Heart left ventricle (tissue), 16 donors: ENCODE measurements at regions of chr1 and their contacts with region 1.

Region 1: DNA sequence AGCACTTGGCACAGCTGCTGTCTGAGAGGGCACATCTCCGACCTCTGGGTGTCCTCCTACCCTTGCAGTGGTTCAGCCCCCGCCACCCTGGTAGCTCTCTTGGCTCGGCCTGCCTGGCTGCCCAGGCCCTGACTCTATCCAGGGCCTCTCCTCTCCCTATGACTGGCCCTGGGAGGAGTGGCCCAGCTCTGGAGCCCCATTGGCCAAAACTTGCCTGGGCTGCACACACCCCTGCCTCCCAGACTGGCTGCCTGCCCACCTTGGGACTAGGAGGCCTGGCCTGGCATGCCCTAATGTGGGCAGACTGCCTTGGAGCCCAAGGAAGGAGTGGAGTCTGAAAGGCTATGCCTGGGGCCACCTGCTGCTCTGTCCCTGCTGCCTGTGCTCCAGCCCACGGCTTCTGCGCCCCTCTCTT is 33.6 kb downstream of the ACOT11 start:
- DNase-seq: peak; percentile 88 to 97 (median 91)
- ATAC-seq: peak; percentile 88 to 90 (median 88)
- H3K4me3 ChIP-seq: no peak overlapping the region
- H3K27ac ChIP-seq: peak overlapping the region; percentile 47 to 98 (median 89)
- H3K4me1 ChIP-seq: peaks cover under 1 to 92% (median 58%) of the 10 kb centered on the region in 12 donors
- H3K27me3 ChIP-seq: no peaks in the 10 kb centered on the region
- CTCF ChIP-seq: peak in 1 of 12 donors; percentile 9
- POLR2A ChIP-seq: no peak

Region 2: GRCh38 chr1:54558434-54559030 is 23.1 kb before region 1 on chr1:
- intact Hi-C with region 1: loop called in 3 of 10 experiments (anchors 2 to 5 kb)
- DNase-seq: peak in 1 of 5 donors; percentile 54
- ATAC-seq: peak; percentile 6 to 25 (median 10)
- H3K4me3 ChIP-seq: peak overlapping the region in 4 of 12 donors; percentile 2 to 26 (median 12)
- H3K27ac ChIP-seq: peak overlapping the region; percentile 19 to 91 (median 82)
- H3K4me1 ChIP-seq: peaks cover 0 to 40% (median 18%) of the 10 kb centered on the region in 12 donors
- H3K27me3 ChIP-seq: no peaks in the 10 kb centered on the region
- CTCF ChIP-seq: no peak
- POLR2A ChIP-seq: no peak

Region 3: DNA sequence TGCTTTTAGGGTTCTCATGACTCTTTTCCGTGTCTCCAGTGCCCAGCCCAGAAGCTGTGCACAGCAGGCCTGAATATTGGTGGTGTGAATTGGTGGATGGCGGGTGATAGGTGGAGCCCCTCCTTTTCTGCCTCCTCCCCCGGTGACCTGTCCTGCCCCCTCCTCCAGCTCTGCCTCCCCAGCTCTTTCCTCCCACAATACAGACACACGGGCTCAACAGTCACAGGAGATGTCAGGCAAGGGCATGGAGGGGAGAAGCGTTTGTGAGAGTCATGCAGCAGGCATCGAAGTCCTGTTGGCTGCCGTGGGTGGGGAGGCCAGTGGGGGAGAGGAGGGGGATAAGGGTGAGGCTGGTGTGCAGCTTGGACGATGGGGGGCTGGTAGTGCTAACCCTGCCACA is 116.7 kb after region 1 on chr1:
- intact Hi-C with region 1: no loop called
- DNase-seq: no peak
- ATAC-seq: no peak
- H3K4me3 ChIP-seq: no peak overlapping the region
- H3K27ac ChIP-seq: no peak overlapping the region
- H3K4me1 ChIP-seq: no peaks in the 10 kb centered on the region
- H3K27me3 ChIP-seq: no peaks in the 10 kb centered on the region
- CTCF ChIP-seq: no peak
- POLR2A ChIP-seq: no peak

Region 4: GRCh38 chr1:54791880-54792522 is 210.4 kb after region 1 on chr1:
- intact Hi-C with region 1: no loop called
- DNase-seq: no peak
- ATAC-seq: no peak
- H3K4me3 ChIP-seq: no peak overlapping the region
- H3K27ac ChIP-seq: peak overlapping the region in 1 of 12 donors; percentile 67
- H3K4me1 ChIP-seq: no peaks in the 10 kb centered on the region
- H3K27me3 ChIP-seq: peaks cover 0 to 35% (median 0%) of the 10 kb centered on the region in 9 donors
- CTCF ChIP-seq: peak in 8 of 12 donors; percentile 14 to 41 (median 24)
- POLR2A ChIP-seq: no peak